ENCODE measurements at regions of chr13 and their contacts with region 1.

Region 1: GRCh38 chr13:40139896-40140520 is 484.5 kb downstream of the COG6 start:
- DNase-seq: peak in 1 of 2 donors; percentile 81
- H3K4me3 ChIP-seq: no peak overlapping the region
- H3K27ac ChIP-seq: no peak overlapping the region
- H3K4me1 ChIP-seq: no peaks in the 10 kb centered on the region
- H3K27me3 ChIP-seq: no peaks in the 10 kb centered on the region
- CTCF ChIP-seq: no peak
- POLR2A ChIP-seq: no peak

Region 2: DNA sequence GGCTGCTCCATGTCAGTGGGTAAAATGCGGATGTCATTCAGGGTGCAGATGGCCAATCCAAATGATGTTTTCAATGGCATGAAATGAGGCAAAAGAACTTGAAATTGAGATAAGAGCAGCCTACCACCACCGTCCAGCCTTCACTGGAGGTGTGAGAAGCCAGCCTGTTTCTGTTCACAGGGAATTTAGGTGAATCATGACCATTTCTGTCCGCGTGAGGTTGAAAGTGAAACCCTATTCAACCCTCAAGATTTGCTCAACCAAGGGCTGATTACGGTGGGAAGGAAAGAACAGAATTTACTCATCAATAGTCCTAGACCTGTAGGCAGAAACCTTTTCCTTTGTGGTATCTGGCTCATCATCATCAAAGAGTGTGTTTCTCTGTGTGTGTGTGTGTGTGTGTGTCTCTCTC is 113.8 kb before region 1 on chr13:
- intact Hi-C with region 1: no loop called
- DNase-seq: no peak
- H3K4me3 ChIP-seq: no peak overlapping the region
- H3K27ac ChIP-seq: no peak overlapping the region
- H3K4me1 ChIP-seq: no peaks in the 10 kb centered on the region
- H3K27me3 ChIP-seq: no peaks in the 10 kb centered on the region
- CTCF ChIP-seq: no peak
- POLR2A ChIP-seq: no peak

Region 3: GRCh38 chr13:40362502-40362901 is 222.5 kb after region 1 on chr13:
- intact Hi-C with region 1: no loop called
- DNase-seq: no peak
- H3K4me3 ChIP-seq: no peak overlapping the region
- H3K27ac ChIP-seq: no peak overlapping the region
- H3K4me1 ChIP-seq: no peaks in the 10 kb centered on the region
- H3K27me3 ChIP-seq: no peaks in the 10 kb centered on the region
- CTCF ChIP-seq: no peak
- POLR2A ChIP-seq: no peak

Region 4: DNA sequence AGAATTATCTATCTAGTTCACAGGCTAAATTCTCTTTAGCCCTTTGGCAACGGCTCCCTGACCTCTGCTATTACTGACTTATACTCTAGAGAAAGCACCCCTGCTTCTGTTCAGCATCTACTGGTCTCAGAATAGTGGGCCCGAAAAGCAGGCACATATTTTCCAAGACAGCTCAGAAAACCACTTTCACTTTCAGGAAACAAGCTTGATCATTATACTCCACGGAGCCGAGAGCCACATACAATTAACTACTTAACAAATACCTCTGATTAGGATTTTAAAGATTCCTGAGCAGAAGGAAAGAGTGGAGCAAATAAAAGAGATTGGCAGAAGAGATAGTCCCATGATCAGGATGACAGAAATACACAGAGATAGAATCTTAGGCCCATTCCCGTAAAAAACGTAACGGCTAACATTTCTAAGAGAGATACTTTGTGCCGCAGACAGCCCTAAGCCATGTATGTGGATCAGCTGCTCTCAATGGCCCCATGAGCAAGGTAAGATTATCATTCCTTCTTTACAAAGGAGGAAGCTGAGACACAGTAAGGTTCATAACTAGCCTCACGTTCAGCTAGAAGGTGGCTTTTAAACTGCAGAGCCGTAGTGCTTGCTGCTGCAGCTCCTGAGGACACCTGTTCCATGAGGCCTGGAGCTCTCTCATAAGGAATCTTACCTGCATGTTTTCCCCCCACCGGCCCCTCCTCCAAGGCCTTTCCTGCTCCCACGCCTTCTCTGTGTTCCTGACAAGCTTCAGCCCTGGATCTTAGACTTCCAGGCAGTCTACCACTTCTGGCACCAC is 299.2 kb after region 1 on chr13:
- intact Hi-C with region 1: no loop called
- DNase-seq: no peak
- H3K4me3 ChIP-seq: peak overlapping the region; percentile 19 to 24
- H3K27ac ChIP-seq: peak overlapping the region; percentile 66
- H3K4me1 ChIP-seq: peaks cover 36% of the 10 kb centered on the region
- H3K27me3 ChIP-seq: no peaks in the 10 kb centered on the region
- CTCF ChIP-seq: no peak
- POLR2A ChIP-seq: no peak

Region 5: GRCh38 chr13:40863723-40864122 is 723.7 kb after region 1 on chr13:
- intact Hi-C with region 1: loop called (anchors 5 kb)
- DNase-seq: no peak
- H3K4me3 ChIP-seq: no peak overlapping the region
- H3K27ac ChIP-seq: no peak overlapping the region
- H3K4me1 ChIP-seq: no peaks in the 10 kb centered on the region
- H3K27me3 ChIP-seq: no peaks in the 10 kb centered on the region
- CTCF ChIP-seq: no peak
- POLR2A ChIP-seq: no peak